Posterior vena cava (tissue), 2 donors: ENCODE measurements at regions of chr11 and their contacts with region 1.

Region 1: DNA sequence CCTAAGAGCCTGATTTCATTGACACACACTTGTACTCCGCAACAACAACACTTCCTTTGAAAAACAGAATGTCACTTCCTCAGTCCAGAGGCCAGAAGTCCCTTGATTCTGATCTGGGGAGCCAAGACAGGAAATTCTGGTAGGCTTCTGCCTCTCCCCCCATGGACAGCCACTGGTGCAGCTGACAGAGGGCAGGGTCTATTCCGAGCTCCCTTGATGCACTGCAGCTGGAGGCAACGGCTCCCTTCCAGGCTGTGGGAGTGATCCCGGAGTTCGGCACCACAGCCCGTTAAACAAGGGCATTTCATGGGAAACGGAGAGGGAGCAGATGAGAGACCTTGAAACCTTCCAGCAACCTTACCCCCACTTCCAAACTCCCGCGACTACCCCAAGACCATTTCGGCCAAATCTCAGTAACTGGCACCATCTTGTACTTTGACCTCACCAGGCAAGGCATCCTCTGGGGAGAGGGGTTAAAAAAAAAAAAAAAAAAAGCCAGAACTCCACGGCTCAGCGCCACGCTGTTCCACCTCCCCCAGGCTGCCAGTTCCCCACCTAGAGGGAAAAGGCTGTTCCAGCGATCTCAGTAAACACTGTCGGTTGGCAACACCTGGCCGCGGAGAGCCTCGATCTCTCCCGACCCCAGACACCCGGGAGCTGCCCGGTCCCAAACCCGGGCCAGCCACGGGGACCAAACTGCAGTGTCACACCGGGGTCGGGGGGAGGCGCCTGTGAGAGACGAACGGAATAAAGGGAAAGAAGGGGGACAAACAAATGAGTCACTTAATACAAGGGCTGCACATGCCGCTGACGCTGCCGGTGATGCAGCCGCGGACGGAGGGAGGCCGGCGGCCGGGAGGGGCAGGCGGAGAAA is 1.1 kb downstream of the GAB2 start:
- DNase-seq: peak; percentile 97

Region 2: GRCh38 chr11:78019821-78020220 is 396.7 kb before region 1 on chr11:
- intact Hi-C with region 1: loop called in 1 of 2 experiments (anchors 10 kb)
- DNase-seq: no peak

Region 3: GRCh38 chr11:78100676-78101456 is 315.7 kb before region 1 on chr11:
- intact Hi-C with region 1: no loop called
- DNase-seq: no peak

Region 4: DNA sequence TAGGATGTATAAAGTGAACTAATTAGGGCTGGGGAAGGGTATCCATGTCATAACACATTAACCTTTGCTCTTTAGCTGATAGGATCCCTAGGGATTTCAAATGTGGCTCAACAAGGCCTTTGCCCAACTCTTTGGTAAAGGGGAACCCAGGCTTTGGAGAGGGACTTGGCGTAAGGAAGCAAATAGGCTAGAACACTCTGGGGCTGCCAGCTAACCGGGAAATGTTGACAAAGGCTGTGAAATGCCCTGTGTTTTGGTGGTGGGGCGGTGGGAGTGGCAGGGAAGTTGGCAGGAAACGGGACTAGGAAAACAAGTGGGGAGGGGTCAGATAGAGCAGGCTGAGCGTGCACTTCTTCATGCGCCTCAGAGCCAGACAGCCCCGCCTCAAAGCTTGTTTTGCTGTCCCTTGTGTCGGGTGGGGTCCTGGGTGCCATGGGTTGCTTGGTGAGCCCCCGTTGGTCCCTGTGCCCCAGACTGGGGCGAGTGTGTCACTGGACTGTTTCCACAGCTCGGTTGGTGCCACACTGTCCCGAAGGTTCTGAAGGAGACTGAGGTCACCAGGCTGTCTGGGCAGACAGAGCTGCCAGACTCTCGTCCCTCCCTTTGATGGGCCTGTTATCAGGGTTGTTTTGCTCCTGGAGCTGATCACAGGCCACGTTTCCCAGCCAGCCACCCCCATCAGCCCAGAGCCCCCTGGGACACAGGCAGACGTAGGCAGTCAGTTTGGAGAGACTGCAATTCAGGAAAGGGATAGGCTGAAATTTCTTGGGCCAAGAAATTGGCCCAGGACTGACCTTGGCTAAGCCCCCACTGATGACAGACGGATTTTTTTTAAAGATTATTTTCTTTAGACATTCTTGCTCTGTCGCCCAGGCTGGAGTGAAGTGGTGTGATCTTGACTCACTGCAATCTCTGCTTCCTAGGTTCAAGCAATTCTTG is 247.7 kb before region 1 on chr11:
- intact Hi-C with region 1: no loop called
- DNase-seq: peak; percentile 97

Region 5: DNA sequence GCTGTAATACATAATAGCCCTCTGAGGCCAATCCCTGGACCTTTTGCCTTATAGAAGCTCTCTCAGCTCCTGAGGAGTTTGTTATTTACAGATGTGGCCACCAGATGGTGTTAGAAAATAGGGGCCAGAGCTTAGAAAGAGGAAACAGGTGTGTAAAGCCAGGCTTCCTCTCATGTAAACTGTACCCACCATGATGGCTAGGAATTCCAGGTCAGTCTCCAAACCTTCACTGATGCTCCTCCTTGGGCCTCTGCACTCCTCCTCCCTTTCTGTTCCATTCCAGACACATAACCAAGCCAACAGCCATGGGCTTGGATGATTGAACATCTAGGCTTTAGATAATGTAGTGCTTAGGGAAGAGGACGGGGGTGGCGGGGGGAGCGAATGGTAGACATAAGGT is 188.1 kb before region 1 on chr11:
- intact Hi-C with region 1: loop called in 1 of 2 experiments (anchors 5 kb)
- DNase-seq: no peak

Region 6: GRCh38 chr11:78318321-78319114 is 98.0 kb before region 1 on chr11:
- intact Hi-C with region 1: loop called in 1 of 2 experiments (anchors 5 kb)
- DNase-seq: no peak

Region 7: DNA sequence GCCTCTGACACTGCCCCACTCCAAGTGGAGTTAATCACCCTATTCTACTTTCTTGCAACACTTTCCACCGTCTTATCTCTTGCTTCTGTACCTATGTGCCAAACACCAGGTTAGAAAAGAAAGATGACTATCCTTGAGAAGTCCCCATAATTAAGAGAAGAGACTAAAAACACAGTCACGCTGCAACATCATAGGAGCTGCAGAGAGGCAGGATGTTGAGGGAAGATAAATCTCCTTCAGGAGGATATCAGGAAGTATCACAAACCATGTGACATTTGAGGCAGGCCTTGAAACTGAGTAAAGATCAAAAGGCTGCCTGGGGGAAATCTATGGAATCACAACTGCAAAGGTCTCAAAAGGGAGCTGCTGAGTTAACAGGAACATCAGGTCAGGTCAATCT is 23.7 kb before region 1 on chr11:
- intact Hi-C with region 1: no loop called
- DNase-seq: no peak

Region 8: DNA sequence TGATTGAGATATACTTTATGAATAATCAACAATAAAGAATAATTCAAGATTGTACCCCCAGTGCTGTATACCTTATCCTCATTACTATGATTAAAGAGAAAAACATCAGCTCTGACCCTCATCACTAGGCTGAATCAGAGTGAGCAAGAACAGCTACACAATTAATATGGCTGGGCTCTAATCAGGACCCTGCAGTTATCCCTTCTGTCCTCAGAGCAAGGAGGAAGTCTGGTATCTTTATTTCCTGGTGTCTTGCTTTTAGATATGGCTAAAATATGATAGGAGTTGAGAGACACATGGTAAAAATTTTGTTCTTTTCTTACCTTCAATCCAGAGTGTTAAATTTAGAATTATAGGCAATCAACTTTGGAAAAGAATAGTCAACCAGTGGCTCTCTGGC is 29.7 kb after region 1 on chr11:
- intact Hi-C with region 1: no loop called
- DNase-seq: no peak

Region 9: DNA sequence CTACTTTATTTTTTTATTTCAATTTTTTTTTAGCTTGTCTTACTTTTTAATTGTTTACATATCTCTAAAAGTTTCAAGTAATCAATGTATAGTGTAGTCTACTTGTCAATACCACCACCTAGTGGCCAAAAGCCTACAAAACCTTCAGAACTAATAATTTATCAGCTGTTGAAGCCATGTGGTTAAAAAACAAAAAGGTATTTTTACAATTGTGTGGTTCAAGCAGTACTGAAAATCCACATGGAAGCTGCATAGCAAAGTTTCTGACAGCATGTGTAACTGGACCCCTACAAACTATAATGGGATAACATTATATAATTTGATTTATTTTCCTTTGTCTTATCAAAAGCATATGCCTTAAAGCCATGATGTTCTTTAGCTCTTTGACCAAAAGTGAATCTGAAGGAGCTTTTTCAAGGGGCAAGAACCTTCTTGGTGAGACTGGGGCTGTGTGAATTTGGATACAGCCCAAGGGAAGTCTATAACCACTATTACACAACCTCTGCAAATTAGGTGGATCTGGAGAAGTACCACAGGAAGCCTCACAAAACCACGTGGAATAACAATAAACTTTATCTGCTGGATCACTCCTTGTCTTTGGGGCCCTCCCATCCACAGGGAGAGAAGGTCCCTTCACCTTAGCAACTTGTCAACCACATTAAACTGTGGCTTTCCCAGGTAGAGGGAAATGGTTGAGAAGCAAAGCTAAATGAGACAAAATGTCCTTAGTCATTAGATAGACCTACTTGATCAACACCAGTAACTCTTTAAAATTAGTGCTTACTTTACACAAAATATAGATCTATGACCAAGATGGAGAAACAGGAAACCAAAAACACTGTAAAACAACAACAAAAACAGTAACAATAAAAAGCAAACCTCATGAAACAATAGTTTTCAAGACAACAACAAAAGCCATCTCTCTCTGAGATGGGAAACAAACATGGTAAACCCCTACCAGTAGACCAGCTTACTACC is 148.2 kb after region 1 on chr11:
- intact Hi-C with region 1: loop called in 1 of 2 experiments (anchors 10 kb)
- DNase-seq: no peak